Naive thymus-derived CD4-positive, alpha-beta T cell (primary cell): ENCODE measurements at regions of chr9 and their contacts with region 1.

Region 1: GRCh38 chr9:15357050-15357653 is 50.1 kb upstream of the TTC39B start:
- DNase-seq: peak in 8 of 9 donors; percentile 14 to 64 (median 46)
- ATAC-seq: peak; percentile 80
- H3K4me3 ChIP-seq: no peak overlapping the region
- H3K4me3 Mint-ChIP-seq: peak overlapping the region in 2 of 10 donors; percentile 11 to 49
- H3K27ac ChIP-seq: no peak overlapping the region
- H3K27ac Mint-ChIP-seq: peak overlapping the region in 5 of 9 donors; percentile 43 to 67 (median 48)
- H3K4me1 ChIP-seq: peaks cover 0 to 13% of the 10 kb centered on the region in 2 donors
- H3K4me1 Mint-ChIP-seq: peaks cover 12 to 41% (median 34%) of the 10 kb centered on the region in 7 donors
- H3K27me3 ChIP-seq: no peaks in the 10 kb centered on the region
- H3K27me3 Mint-ChIP-seq: no peaks in the 10 kb centered on the region

Region 2: DNA sequence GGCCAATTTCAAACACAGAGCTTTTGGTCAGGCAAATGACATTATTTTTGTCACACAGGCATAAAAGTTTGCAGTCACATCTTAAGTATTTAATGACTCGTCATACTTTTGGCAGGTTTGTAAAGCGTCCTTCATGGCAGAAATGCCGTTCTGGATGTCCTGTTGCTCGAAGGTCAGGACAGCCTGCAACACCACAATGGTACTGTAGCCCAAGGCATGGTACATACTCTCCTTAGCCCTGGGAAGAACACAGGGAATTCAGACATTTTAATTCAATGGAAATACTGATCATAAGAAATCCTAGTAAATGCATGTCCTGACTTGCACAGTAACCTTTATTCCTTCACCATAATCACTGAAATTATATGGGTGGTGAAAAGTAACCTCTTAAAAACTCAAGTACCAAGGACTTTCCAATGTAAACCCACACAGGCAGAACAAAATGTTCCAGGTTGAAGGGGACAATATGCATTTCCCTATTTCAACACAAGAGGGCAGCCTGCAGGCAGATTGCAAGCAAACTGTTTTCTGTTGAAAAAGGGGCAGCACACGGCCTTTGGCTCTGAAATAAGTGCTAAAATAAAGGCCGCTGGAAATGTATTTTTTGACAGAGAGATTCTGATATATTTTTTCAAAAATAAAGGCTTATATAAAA is 145.9 kb before region 1 on chr9:
- CTCF ChIA-PET with region 1: no interaction called
- POLR2A ChIA-PET with region 1: no interaction called
- intact Hi-C with region 1: loop called (anchors 1 to 2 kb)
- DNase-seq: peak in 8 of 9 donors; percentile 26 to 69 (median 58)
- ATAC-seq: peak; percentile 78
- H3K4me3 ChIP-seq: no peak overlapping the region
- H3K4me3 Mint-ChIP-seq: no peak overlapping the region
- H3K27ac ChIP-seq: no peak overlapping the region
- H3K27ac Mint-ChIP-seq: no peak overlapping the region
- H3K4me1 ChIP-seq: no peaks in the 10 kb centered on the region
- H3K4me1 Mint-ChIP-seq: peaks cover 4 to 12% (median 8%) of the 10 kb centered on the region in 7 donors
- H3K27me3 ChIP-seq: no peaks in the 10 kb centered on the region
- H3K27me3 Mint-ChIP-seq: no peaks in the 10 kb centered on the region

Region 3: DNA sequence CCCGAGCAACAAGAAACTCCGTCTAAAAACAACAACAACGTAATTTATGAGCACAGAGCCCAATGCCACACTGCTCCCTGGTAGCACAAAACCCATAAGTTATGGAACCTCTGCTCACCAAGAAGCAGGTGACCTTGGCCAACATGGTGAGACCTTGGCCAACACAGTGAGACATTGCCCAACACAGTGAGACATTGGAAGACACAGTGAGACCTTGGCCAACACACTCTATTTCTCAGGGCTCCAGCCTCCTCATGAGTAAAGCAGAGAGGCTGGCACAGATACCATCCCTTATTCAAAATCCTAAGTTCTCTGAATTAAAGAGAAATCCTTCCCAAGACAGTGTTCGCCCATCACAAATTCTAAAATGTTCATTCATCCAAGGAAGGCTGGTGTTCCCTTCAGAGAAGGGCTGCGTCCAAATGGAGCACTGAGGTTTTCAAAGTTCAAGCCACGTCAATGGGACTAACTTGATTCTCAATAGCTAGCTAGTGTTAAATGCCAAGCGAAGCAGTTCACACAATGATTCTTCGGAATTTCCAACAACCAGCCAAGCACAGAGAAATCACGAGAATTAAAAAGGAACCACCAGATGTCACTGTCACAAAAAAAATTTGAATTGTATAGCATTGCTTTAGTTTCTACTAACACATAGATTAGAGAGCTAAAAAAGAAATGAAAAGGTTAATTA is 79.6 kb before region 1 on chr9:
- CTCF ChIA-PET with region 1: interaction called, 9 read pairs
- POLR2A ChIA-PET with region 1: no interaction called
- intact Hi-C with region 1: loop called (anchors 1 to 5 kb)
- DNase-seq: peak in 5 of 9 donors; percentile 27 to 53 (median 35)
- ATAC-seq: peak; percentile 48
- H3K4me3 ChIP-seq: no peak overlapping the region
- H3K4me3 Mint-ChIP-seq: peak overlapping the region in 1 of 10 donors; percentile 13
- H3K27ac ChIP-seq: no peak overlapping the region
- H3K27ac Mint-ChIP-seq: peak overlapping the region in 5 of 9 donors; percentile 2 to 73 (median 31)
- H3K4me1 ChIP-seq: peaks cover 0 to 4% of the 10 kb centered on the region in 2 donors
- H3K4me1 Mint-ChIP-seq: peaks cover 18 to 85% (median 48%) of the 10 kb centered on the region in 7 donors
- H3K27me3 ChIP-seq: no peaks in the 10 kb centered on the region
- H3K27me3 Mint-ChIP-seq: no peaks in the 10 kb centered on the region

Region 4: GRCh38 chr9:15416880-15417279 is 59.7 kb after region 1 on chr9:
- CTCF ChIA-PET with region 1: no interaction called
- POLR2A ChIA-PET with region 1: no interaction called
- intact Hi-C with region 1: loop called (anchors 1 to 2 kb)
- DNase-seq: peak in 7 of 9 donors; percentile 21 to 45 (median 39)
- ATAC-seq: no peak
- H3K4me3 ChIP-seq: no peak overlapping the region
- H3K4me3 Mint-ChIP-seq: no peak overlapping the region
- H3K27ac ChIP-seq: no peak overlapping the region
- H3K27ac Mint-ChIP-seq: no peak overlapping the region
- H3K4me1 ChIP-seq: no peaks in the 10 kb centered on the region
- H3K4me1 Mint-ChIP-seq: peaks cover 0 to 10% (median 2%) of the 10 kb centered on the region in 7 donors
- H3K27me3 ChIP-seq: no peaks in the 10 kb centered on the region
- H3K27me3 Mint-ChIP-seq: peaks cover 0 to 7% (median 0%) of the 10 kb centered on the region in 5 donors

Region 5: DNA sequence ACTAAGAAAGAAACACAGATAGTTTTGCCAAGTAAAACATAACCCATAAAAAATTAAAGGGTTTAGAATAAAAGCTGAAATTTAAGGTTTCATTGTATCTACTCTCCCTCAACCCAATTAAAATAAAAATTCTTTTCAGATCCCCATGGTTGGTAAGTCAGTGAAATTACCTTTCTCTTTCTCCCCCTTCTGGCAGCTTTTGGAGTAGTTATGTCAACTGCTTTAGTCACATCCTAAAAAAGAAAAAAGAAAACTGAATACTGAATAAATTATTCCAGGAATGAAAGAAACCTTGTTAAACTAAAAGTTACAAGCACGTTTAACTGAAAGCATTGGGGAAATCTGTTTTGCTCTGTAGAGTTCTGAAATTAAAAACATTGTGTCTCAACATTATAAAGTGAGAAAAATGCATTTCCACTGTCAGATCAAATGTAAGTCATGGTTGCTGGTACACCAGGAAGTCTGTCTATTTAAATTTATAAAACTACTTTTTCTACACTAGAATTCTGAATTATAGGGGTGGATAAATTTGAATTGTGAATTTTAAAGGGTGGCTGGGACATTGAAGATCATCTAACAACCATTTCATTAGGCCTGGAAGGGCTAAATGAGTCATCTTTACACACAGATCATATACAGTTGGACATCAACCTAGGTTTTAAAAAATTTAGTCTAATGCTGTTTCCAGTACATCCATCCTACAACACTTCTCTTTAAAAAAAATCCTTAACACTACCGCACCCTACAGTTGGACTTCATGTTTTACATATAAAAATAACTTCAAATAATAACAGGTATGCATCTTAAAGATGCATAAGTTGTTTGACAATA is 128.9 kb after region 1 on chr9:
- CTCF ChIA-PET with region 1: interaction called, 3 read pairs
- POLR2A ChIA-PET with region 1: no interaction called
- intact Hi-C with region 1: loop called (anchors 1 to 10 kb)
- DNase-seq: peak in 5 of 9 donors; percentile 27 to 41 (median 31)
- ATAC-seq: peak; percentile 45
- H3K4me3 ChIP-seq: no peak overlapping the region
- H3K4me3 Mint-ChIP-seq: no peak overlapping the region
- H3K27ac ChIP-seq: no peak overlapping the region
- H3K27ac Mint-ChIP-seq: peak overlapping the region in 8 of 9 donors; percentile 10 to 63 (median 42)
- H3K4me1 ChIP-seq: peaks cover 6 to 9% of the 10 kb centered on the region in 2 donors
- H3K4me1 Mint-ChIP-seq: peaks cover 19 to 57% (median 47%) of the 10 kb centered on the region in 7 donors
- H3K27me3 ChIP-seq: no peaks in the 10 kb centered on the region
- H3K27me3 Mint-ChIP-seq: no peaks in the 10 kb centered on the region

Region 6: GRCh38 chr9:15529566-15530324 is 172.6 kb after region 1 on chr9:
- CTCF ChIA-PET with region 1: interaction called, 4 read pairs
- POLR2A ChIA-PET with region 1: no interaction called
- intact Hi-C with region 1: loop called in 1 of 2 experiments (anchors 1 kb)
- DNase-seq: no peak
- ATAC-seq: no peak
- H3K4me3 ChIP-seq: no peak overlapping the region
- H3K4me3 Mint-ChIP-seq: no peak overlapping the region
- H3K27ac ChIP-seq: no peak overlapping the region
- H3K27ac Mint-ChIP-seq: no peak overlapping the region
- H3K4me1 ChIP-seq: no peaks in the 10 kb centered on the region
- H3K4me1 Mint-ChIP-seq: peaks cover 0 to 18% (median 7%) of the 10 kb centered on the region in 7 donors
- H3K27me3 ChIP-seq: no peaks in the 10 kb centered on the region
- H3K27me3 Mint-ChIP-seq: peaks cover 0 to 7% (median 0%) of the 10 kb centered on the region in 5 donors

Region 7: GRCh38 chr9:15606643-15607472 is 249.7 kb after region 1 on chr9:
- CTCF ChIA-PET with region 1: interaction called, 5 read pairs
- POLR2A ChIA-PET with region 1: no interaction called
- intact Hi-C with region 1: loop called (anchors 1 to 2 kb)
- DNase-seq: peak in 7 of 9 donors; percentile 29 to 71 (median 60)
- ATAC-seq: peak; percentile 55
- H3K4me3 ChIP-seq: no peak overlapping the region
- H3K4me3 Mint-ChIP-seq: no peak overlapping the region
- H3K27ac ChIP-seq: no peak overlapping the region
- H3K27ac Mint-ChIP-seq: no peak overlapping the region
- H3K4me1 ChIP-seq: no peaks in the 10 kb centered on the region
- H3K4me1 Mint-ChIP-seq: peaks cover 0 to 7% (median 0%) of the 10 kb centered on the region in 7 donors
- H3K27me3 ChIP-seq: no peaks in the 10 kb centered on the region
- H3K27me3 Mint-ChIP-seq: no peaks in the 10 kb centered on the region